Stomach (tissue), 19 donors: ENCODE measurements at regions of chr6 and their contacts with region 1.

Region 1: DNA sequence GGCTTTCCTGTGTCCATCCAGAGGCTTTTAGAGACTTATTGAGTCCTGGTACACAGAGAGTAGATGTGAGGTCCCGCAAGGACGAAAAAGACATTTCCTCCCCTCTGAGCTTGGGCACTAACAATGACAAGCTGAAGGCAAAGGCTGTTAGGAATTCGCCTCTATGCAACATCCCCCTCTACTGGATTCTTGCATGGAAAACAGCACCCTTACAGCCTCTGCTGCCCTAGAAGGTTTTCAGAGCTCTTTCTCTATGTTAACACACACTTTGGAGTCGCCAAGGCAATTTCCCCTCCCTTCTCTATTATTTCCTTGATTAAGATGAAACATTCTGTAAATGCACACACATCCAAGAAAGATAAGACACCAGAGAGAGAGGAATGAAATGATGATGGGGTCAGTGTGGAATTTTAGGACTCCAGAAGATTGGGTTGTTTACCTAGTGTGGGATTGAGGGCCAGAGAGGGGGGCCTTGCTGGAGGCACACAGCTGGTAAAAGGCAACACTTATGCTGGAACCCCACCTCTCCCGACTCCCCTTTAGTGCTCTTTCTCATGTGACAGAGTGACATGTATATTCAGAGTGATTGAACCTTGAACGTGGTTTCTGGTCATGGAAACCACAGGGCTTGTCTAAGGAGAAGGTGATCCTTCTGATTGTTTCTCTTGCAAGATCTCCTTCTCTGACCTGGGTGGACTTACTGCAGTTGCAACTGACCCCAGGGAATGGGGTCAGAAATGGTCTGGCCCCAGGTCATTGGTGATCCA is 300.7 kb downstream of the CLIC5 start:
- DNase-seq: peak; percentile 42 to 93
- H3K4me3 ChIP-seq: no peak overlapping the region
- H3K27ac ChIP-seq: no peak overlapping the region
- H3K4me1 ChIP-seq: peaks cover 0 to 15% (median 4%) of the 10 kb centered on the region in 4 donors
- H3K27me3 ChIP-seq: no peaks in the 10 kb centered on the region
- CTCF ChIP-seq: peak in 5 of 7 experiments; percentile 68 to 85 (median 74)
- EP300 ChIP-seq: no peak
- POLR2A ChIP-seq: no peak

Region 2: DNA sequence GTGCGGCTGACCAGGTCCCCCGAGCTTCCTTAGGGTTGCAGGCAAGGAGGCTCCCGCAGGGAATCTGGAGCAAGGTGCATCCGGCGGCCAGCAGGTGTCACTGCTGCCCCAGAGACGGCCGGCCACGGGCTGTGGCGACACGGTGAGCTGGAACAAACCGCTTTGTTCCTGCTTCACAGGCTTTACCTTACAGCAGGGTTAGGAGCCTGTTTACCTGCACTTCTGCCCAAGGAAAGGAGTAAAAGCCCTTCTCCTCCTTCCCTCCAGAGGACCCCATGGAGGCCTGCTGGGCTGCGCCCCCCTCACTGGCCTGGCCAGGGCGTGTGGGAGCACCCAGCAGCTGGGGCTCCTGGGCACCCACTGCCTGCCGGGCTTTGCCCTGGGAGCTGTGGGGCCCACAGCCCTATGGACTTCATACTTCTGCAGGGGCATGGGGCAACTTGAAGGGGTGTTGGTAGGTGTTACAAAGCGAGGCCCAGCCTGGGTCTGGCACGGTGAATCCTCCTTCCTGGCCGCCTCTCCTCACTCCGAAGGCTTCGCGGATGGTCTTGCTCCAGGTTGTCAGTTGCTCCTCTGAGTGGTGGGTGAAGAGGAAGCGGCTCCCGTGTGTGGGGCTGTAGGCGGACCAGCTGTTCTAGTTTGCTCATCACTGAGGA is 1239.0 kb before region 1 on chr6:
- intact Hi-C with region 1: loop called (anchors 10 kb)
- DNase-seq: peak; percentile 82 to 95
- H3K4me3 ChIP-seq: no peak overlapping the region
- H3K27ac ChIP-seq: no peak overlapping the region
- H3K4me1 ChIP-seq: peaks cover 6 to 9% (median 7%) of the 10 kb centered on the region in 4 donors
- H3K27me3 ChIP-seq: no peaks in the 10 kb centered on the region
- CTCF ChIP-seq: peak in 5 of 7 experiments; percentile 80 to 88 (median 86)
- EP300 ChIP-seq: no peak
- POLR2A ChIP-seq: no peak

Region 3: GRCh38 chr6:44655412-44656342 is 1059.2 kb before region 1 on chr6:
- intact Hi-C with region 1: loop called (anchors 10 kb)
- DNase-seq: peak; percentile 64 to 87
- H3K4me3 ChIP-seq: no peak overlapping the region
- H3K27ac ChIP-seq: no peak overlapping the region
- H3K4me1 ChIP-seq: peaks cover 0 to 15% (median 6%) of the 10 kb centered on the region in 4 donors
- H3K27me3 ChIP-seq: no peaks in the 10 kb centered on the region
- CTCF ChIP-seq: peak in 5 of 7 experiments; percentile 61 to 88 (median 85)
- EP300 ChIP-seq: no peak
- POLR2A ChIP-seq: no peak

Region 4: GRCh38 chr6:45086360-45087084 is 628.4 kb before region 1 on chr6:
- intact Hi-C with region 1: loop called (anchors 10 kb)
- DNase-seq: no peak
- H3K4me3 ChIP-seq: no peak overlapping the region
- H3K27ac ChIP-seq: no peak overlapping the region
- H3K4me1 ChIP-seq: no peaks in the 10 kb centered on the region
- H3K27me3 ChIP-seq: no peaks in the 10 kb centered on the region
- CTCF ChIP-seq: peak in 1 of 7 experiments; percentile 15
- EP300 ChIP-seq: no peak
- POLR2A ChIP-seq: no peak

Region 5: GRCh38 chr6:45801471-45802289 is 86.8 kb after region 1 on chr6:
- intact Hi-C with region 1: no loop called
- DNase-seq: no peak
- H3K4me3 ChIP-seq: no peak overlapping the region
- H3K27ac ChIP-seq: no peak overlapping the region
- H3K4me1 ChIP-seq: no peaks in the 10 kb centered on the region
- H3K27me3 ChIP-seq: no peaks in the 10 kb centered on the region
- CTCF ChIP-seq: no peak
- EP300 ChIP-seq: no peak
- POLR2A ChIP-seq: no peak